ENCODE measurements at regions of chr2 and their contacts with region 1.

Region 1: DNA sequence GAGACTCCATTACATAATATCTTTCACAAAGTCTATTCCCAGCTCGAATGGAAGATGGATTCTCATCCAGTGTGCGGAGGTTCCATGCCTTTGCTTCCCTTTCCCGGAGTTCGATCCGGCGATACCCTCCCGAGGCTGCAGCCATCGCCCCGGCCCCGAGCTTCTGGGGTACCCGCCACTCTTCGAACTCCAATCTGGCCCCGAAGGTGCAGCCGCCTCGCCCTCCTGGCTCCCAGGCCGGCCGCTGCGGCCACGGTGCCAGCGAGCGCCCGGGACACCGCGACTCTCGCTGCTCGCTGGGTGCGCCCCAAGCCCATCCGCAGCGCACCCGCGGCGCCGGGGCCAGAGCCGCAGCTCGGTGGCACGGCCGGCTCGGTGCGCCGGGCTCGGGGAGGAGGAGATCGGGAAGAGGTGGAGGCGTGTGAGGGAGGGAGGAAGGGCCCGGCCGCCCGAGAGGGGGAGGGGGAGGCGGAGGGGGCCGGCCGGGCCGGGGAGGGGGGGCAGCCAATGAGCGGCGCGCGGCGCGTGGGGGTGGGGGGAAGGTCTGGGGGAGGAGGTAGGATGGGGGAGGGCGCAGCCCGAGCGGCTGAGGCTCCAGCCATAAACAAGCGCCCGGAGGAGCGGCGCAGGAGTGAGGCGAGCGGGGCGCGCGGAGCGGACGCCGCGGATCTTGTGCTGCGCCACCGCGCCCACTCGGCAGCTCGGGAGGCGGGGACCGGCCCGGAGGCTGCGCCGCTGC is at the start of gene CRIM1:
- DNase-seq: peak; percentile 93 to 96
- ATAC-seq: peak; percentile 86
- H3K4me3 ChIP-seq: peak within 1 kb of the TSS; percentile 92 to 99
- H3K27ac ChIP-seq: peak within 1 kb of the TSS; percentile 84 to 89
- H3K4me1 ChIP-seq: peaks cover 0 to under 1% of the 10 kb centered on the region in 2 donors
- H3K27me3 ChIP-seq: no peaks in the 10 kb centered on the region
- total RNA-seq, gene CRIM1: 228 to 727 TPM

Region 2: DNA sequence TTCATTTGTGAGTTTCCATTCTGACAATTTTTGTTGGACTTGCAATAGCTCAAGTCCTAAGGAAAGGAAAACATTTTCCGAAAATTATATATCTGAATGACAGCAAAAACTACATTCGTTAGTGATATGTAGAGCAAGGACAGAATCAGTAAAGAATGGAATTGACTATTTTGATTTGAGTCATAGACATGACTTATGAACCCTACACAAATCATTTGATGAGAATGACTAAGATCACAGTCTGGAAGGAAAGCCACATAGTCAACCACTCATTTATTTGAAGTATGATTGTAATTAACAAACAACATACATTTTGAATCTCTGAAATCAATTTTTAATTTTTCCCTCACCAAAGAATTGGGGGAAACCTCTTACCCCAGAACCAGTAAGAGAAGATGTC is 231.3 kb before region 1 on chr2:
- intact Hi-C with region 1: no loop called
- DNase-seq: no peak
- ATAC-seq: no peak
- H3K4me3 ChIP-seq: no peak overlapping the region
- H3K27ac ChIP-seq: no peak overlapping the region
- H3K4me1 ChIP-seq: no peaks in the 10 kb centered on the region
- H3K27me3 ChIP-seq: no peaks in the 10 kb centered on the region

Region 3: DNA sequence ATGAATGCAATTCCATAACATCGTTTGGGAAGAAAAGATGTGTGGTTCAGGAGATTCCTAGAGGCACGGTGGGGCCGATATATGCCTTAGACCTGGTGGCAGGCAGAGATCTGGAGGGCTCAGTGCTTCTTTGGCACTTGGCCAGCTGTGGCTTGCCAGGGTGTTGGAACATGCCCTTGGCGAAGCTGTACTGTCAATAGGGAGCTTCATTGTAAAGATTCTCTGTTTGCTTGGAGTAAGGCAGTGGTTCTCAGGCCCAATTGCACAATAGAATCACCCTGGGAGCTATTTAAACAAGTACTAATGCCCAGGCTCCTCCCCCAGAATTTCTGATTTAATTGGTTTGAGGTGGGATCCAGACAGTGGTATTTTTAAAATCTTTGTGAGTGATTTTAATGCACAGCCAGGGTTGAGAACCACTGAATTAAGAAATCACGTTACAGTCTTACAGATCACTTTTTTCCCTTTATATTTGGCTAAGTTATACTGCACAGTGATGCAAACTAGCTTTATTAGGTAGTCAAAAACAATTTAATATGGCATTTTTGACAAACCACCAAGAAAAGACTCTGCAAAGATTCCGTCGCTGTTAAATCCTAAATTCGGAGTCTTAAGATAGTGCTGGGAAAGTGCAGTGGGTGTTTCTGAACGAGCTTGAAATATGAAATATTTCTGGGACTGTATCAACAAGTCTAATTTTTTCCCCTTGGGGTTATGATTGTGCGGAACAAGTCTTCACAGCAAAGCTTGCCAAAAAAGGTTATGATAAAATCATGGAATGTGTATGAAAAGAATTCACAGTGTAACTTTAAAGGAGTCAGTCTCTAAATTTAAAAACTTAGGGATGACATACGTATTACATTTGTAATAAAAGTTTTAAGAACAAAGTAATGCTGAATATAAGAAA is 78.2 kb after region 1 on chr2:
- intact Hi-C with region 1: loop called in 1 of 2 experiments (anchors 5 kb)
- DNase-seq: peak; percentile 47 to 84
- ATAC-seq: peak; percentile 73
- H3K4me3 ChIP-seq: peak overlapping the region in 1 of 2 donors; percentile 39
- H3K27ac ChIP-seq: peak overlapping the region; percentile 14 to 68
- H3K4me1 ChIP-seq: peaks cover 10 to 18% of the 10 kb centered on the region in 2 donors
- H3K27me3 ChIP-seq: no peaks in the 10 kb centered on the region

Region 4: GRCh38 chr2:36461039-36461681 is 105.8 kb after region 1 on chr2:
- intact Hi-C with region 1: loop called (anchors 5 kb)
- DNase-seq: no peak
- ATAC-seq: no peak
- H3K4me3 ChIP-seq: no peak overlapping the region
- H3K27ac ChIP-seq: peak overlapping the region; percentile 70 to 89
- H3K4me1 ChIP-seq: peaks cover 7 to 10% of the 10 kb centered on the region in 2 donors
- H3K27me3 ChIP-seq: no peaks in the 10 kb centered on the region

Region 5: GRCh38 chr2:36507408-36507812 is 152.1 kb after region 1 on chr2:
- intact Hi-C with region 1: loop called (anchors 5 kb)
- DNase-seq: no peak
- ATAC-seq: peak; percentile 84
- H3K4me3 ChIP-seq: no peak overlapping the region
- H3K27ac ChIP-seq: no peak overlapping the region
- H3K4me1 ChIP-seq: peaks cover 0 to 2% of the 10 kb centered on the region in 2 donors
- H3K27me3 ChIP-seq: no peaks in the 10 kb centered on the region

Region 6: DNA sequence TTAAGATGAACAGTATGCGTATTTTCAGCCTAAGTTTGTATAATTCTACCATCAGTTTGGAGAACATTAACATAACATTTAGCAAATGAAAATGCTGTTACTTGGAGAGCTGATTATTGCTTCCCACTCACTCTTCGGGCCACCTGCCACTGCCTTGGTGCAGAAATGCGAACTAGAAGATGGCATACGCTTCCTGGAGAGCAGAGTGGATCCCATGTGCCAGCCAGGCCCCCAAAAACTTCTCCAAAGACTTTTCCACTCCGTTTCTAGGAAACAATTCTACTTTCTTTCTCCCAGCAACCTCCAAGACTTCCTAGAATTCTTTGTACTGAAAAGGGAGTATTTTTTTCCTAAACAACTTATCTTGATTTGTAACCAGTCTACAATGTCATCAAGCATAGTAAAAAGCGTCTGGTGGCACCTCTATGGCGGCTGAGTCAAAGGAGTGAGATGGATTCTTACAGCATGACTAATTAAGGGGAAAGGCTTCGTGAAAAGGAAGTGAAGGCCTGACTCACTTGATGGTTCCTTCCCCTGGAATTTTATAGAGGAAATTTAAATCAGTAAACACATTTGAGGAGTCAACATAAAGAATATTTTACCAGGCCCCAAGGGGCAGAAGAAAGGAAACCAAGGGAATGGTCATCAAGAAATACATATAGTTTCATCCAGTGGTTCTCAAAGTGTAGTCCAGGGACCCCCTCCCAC is 206.1 kb after region 1 on chr2:
- intact Hi-C with region 1: loop called in 1 of 2 experiments (anchors 10 kb)
- DNase-seq: no peak
- ATAC-seq: peak; percentile 57
- H3K4me3 ChIP-seq: no peak overlapping the region
- H3K27ac ChIP-seq: peak overlapping the region in 1 of 2 donors; percentile 96
- H3K4me1 ChIP-seq: peaks cover 0 to under 1% of the 10 kb centered on the region in 2 donors
- H3K27me3 ChIP-seq: no peaks in the 10 kb centered on the region

Region 7: DNA sequence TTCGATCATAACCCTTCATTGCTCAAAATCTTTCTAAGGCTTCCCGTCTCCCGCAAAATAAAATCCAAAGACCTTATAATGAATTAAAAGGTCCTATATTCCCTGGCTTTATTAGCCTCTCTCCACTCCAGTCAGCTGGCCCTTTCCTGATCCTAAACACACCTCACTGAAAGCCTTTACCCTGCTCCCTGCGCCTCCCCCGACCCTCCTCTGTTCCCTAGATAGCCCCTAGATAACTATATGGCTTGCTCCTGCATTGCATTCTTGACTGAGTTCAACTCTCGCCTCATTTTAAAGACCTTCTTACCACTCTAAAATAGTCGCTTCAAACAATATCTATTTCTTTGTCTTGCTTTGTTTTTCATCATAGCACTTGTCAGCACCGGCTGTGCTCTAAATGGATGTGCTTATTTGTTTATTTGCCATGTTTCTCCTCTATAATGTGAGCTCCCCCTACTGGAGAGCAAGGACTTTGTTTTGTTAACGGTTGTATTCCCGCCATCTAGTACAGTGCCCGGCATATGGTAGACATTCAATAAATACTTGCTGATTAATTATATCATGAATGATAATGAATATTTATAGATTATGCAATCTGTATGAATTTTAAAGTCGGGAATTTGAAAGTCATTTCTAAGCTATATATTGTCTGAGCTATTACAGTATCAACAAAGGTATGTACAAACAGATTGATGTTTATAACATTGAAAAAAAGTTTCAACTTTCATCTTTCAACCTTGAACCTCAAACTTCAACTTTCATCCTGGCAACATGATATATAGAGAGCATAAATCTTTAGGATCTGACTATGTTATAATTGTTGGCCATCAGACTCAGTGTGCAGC is 308.8 kb after region 1 on chr2:
- intact Hi-C with region 1: loop called (anchors 2 to 5 kb)
- DNase-seq: no peak
- ATAC-seq: peak; percentile 75
- H3K4me3 ChIP-seq: no peak overlapping the region
- H3K27ac ChIP-seq: no peak overlapping the region
- H3K4me1 ChIP-seq: no peaks in the 10 kb centered on the region
- H3K27me3 ChIP-seq: no peaks in the 10 kb centered on the region